MCF 10A (cell line): ENCODE measurements at regions of chr2 and their contacts with region 1.

Region 1: GRCh38 chr2:208072250-208072892 is 47.0 kb upstream of the PLEKHM3 start:
- DNase-seq: peak; percentile 75
- H3K4me3 Mint-ChIP-seq: no peak overlapping the region
- H3K27ac Mint-ChIP-seq: no peak overlapping the region
- H3K4me1 Mint-ChIP-seq: no peaks in the 10 kb centered on the region
- H3K27me3 Mint-ChIP-seq: no peaks in the 10 kb centered on the region
- CTCF ChIP-seq: peak; percentile 68

Region 2: DNA sequence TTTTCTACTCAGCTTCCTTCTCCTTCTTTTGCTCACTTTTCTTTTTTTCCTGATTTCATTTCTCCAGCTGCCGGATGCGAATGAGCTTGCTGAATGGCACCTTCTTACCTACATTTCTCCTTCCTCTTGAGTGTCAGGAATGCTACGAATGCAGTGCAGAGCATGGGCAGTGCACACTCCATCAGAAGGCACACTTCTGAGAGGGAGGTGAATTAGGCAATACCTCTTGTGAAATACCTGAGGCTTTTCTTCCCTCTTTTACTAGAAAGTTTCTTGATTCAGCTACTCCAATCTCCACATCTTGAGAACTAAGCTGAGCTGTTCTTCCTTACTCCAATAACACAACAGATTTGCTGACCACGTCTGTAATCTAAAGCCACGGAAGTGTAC is 98.2 kb before region 1 on chr2:
- CTCF ChIA-PET with region 1: interaction called, 3 read pairs
- POLR2A ChIA-PET with region 1: no interaction called
- intact Hi-C with region 1: loop called (anchors 5 kb)
- DNase-seq: peak; percentile 57
- H3K4me3 Mint-ChIP-seq: no peak overlapping the region
- H3K27ac Mint-ChIP-seq: no peak overlapping the region
- H3K4me1 Mint-ChIP-seq: peaks cover 6% of the 10 kb centered on the region
- H3K27me3 Mint-ChIP-seq: no peaks in the 10 kb centered on the region
- CTCF ChIP-seq: no peak

Region 3: GRCh38 chr2:208062113-208062512 is 10.3 kb before region 1 on chr2:
- CTCF ChIA-PET with region 1: interaction called, 19 read pairs
- POLR2A ChIA-PET with region 1: interaction called, 3 read pairs
- intact Hi-C with region 1: no loop called
- DNase-seq: peak; percentile 50
- H3K4me3 Mint-ChIP-seq: no peak overlapping the region
- H3K27ac Mint-ChIP-seq: no peak overlapping the region
- H3K4me1 Mint-ChIP-seq: peaks cover 7% of the 10 kb centered on the region
- H3K27me3 Mint-ChIP-seq: peaks cover 16% of the 10 kb centered on the region
- CTCF ChIP-seq: no peak

Region 4: GRCh38 chr2:208083807-208084206 is 11.4 kb after region 1 on chr2:
- CTCF ChIA-PET with region 1: interaction called, 10 read pairs
- POLR2A ChIA-PET with region 1: no interaction called
- intact Hi-C with region 1: no loop called
- DNase-seq: no peak
- H3K4me3 Mint-ChIP-seq: no peak overlapping the region
- H3K27ac Mint-ChIP-seq: no peak overlapping the region
- H3K4me1 Mint-ChIP-seq: peaks cover 4% of the 10 kb centered on the region
- H3K27me3 Mint-ChIP-seq: peaks cover 43% of the 10 kb centered on the region
- CTCF ChIP-seq: no peak

Region 5: DNA sequence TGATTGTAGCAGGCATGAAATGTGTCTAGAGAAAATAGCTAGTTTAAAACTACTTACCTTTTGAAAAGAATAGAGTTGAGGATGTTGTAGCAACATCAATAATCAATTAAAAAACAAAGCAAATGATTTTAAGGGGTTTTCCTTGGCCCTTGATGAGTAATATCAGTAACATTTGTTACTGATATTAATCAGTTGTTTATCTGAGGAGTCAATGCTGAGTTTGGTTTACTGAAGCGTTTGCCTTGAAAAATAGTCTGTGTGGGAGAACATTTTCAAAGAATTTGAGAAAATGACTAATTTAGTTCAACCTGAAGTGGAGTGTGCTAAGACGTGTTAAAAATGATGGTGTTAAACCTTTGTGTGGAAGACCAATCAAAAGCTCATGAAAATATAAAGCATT is 343.5 kb after region 1 on chr2:
- CTCF ChIA-PET with region 1: no interaction called
- POLR2A ChIA-PET with region 1: no interaction called
- intact Hi-C with region 1: no loop called
- DNase-seq: no peak
- H3K4me3 Mint-ChIP-seq: no peak overlapping the region
- H3K27ac Mint-ChIP-seq: no peak overlapping the region
- H3K4me1 Mint-ChIP-seq: no peaks in the 10 kb centered on the region
- H3K27me3 Mint-ChIP-seq: peaks cover 47% of the 10 kb centered on the region
- CTCF ChIP-seq: no peak

Region 6: DNA sequence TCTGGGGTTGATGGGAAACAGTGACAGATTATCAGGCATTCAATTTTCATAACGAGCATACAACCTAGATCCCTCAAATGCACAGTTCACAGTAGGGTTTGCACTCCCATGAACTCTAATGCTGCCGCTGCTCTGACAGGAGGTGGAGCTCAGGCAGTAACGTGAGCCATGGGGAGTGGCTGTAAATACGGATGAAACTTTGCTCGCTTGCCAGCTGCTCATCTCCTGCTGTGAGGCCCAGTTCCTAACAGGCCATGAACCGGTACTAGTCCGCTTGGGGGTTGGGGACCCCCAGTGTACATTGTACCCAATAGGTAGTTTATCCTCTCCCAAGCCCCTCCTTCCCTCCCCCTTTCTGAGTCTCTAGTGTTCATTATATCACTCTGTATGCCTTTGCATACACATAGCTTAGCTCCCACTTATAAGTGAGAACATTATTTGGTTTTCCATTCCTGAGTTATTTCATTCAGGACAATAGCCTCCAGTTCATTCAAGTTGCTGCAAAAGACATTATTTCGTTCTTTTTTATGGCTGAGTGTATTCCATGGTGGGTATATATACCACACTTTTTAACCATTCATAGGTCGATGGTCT is 428.9 kb after region 1 on chr2:
- CTCF ChIA-PET with region 1: no interaction called
- POLR2A ChIA-PET with region 1: no interaction called
- intact Hi-C with region 1: no loop called
- DNase-seq: peak; percentile 36
- H3K4me3 Mint-ChIP-seq: no peak overlapping the region
- H3K27ac Mint-ChIP-seq: no peak overlapping the region
- H3K4me1 Mint-ChIP-seq: no peaks in the 10 kb centered on the region
- H3K27me3 Mint-ChIP-seq: no peaks in the 10 kb centered on the region
- CTCF ChIP-seq: no peak